HEK293 (cell line): ENCODE measurements at regions of chr15 and their contacts with region 1.

Region 1: DNA sequence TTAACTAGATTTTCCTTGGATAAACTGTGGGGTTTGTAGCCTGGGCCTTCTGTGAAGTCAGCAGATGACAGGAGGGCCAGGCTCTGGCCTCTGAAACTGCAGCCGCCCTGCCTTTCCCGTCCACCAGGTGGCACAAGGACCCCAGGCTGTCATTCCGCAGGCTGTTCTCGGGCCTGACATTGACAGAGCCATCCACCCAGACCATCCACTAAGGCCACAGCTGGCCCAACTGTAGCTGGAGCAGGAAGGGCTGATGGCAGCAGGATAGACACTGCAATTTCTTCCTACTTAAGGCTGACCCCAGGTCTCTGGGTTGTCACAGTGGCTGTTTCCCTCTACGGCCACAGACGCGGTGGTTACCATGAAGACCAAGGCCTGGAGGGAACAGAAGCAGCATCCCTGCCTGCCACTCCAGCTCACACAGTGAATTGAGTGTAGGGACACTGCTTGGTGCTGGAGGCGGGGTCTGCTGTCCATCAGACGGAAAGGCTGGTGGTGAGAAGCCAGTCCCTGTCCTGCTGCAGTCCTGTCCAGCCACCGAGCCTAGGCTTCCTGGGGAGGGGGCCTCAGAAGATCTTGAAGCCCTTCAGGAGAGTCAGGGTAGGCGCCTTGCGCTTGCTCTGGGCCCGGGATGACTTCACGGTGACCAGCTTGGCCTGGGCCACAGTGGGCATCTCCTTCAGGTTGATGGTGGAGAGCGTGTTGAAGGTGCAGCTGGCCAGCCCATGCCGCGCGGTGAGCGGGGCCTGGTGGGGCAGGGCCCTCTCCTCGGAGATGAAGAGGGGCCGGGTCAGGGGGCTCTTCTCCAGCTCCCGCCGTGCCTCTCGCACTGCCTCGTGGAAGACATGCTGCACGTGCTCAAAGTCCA is 9.4 kb downstream of the SLC51B start:
- H3K4me3 ChIP-seq: no peak overlapping the region
- H3K27ac ChIP-seq: no peak overlapping the region
- H3K4me1 ChIP-seq: no peaks in the 10 kb centered on the region
- CTCF ChIP-seq: peak; percentile 62; the same call in 1 of the 2 replicates

Region 2: GRCh38 chr15:64856429-64857145 is 198.0 kb before region 1 on chr15:
- CTCF ChIA-PET with region 1: no interaction called
- POLR2A ChIA-PET with region 1: no interaction called
- H3K4me3 ChIP-seq: no peak overlapping the region
- H3K27ac ChIP-seq: no peak overlapping the region
- H3K4me1 ChIP-seq: no peaks in the 10 kb centered on the region; the same call in 1 of the 2 replicates
- CTCF ChIP-seq: no peak

Region 3: DNA sequence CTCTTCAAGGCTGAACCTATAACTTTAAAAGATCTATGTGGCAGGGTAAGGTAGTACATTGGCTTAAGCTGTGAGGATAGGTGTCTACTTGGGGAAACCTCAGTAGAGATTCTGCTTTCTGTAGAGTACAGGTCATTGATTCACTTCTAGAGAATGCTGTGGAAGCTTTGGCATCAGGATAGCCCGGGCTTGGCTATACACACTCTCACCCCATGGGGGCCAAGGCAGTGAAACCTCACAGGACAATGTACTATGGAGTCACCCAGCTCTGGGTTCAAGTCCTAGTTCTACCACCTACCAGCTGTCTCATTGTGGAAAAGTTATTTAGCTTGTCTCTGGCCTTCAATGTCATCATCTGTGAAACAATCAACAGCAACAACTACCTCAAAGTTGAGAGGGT is 34.1 kb before region 1 on chr15:
- CTCF ChIA-PET with region 1: no interaction called
- POLR2A ChIA-PET with region 1: no interaction called
- H3K4me3 ChIP-seq: no peak overlapping the region
- H3K27ac ChIP-seq: no peak overlapping the region
- H3K4me1 ChIP-seq: no peaks in the 10 kb centered on the region
- CTCF ChIP-seq: no peak

Region 4: GRCh38 chr15:65032801-65033537 is 21.6 kb before region 1 on chr15:
- CTCF ChIA-PET with region 1: interaction called, 15 read pairs
- POLR2A ChIA-PET with region 1: no interaction called
- H3K4me3 ChIP-seq: no peak overlapping the region
- H3K27ac ChIP-seq: no peak overlapping the region
- H3K4me1 ChIP-seq: no peaks in the 10 kb centered on the region
- CTCF ChIP-seq: peak; percentile 83

Region 5: GRCh38 chr15:65042776-65043327 is 11.7 kb before region 1 on chr15:
- CTCF ChIA-PET with region 1: interaction called, 10 read pairs
- POLR2A ChIA-PET with region 1: no interaction called
- H3K4me3 ChIP-seq: no peak overlapping the region
- H3K27ac ChIP-seq: no peak overlapping the region
- H3K4me1 ChIP-seq: no peaks in the 10 kb centered on the region
- CTCF ChIP-seq: no peak

Region 6: GRCh38 chr15:65077981-65078352 is 23.4 kb after region 1 on chr15:
- CTCF ChIA-PET with region 1: interaction called, 94 read pairs
- POLR2A ChIA-PET with region 1: interaction called, 3 read pairs
- H3K4me3 ChIP-seq: no peak overlapping the region
- H3K27ac ChIP-seq: no peak overlapping the region
- H3K4me1 ChIP-seq: peaks cover 8% of the 10 kb centered on the region
- CTCF ChIP-seq: no peak

Region 7: GRCh38 chr15:65083262-65083701 is 28.7 kb after region 1 on chr15:
- CTCF ChIA-PET with region 1: interaction called, 94 read pairs
- POLR2A ChIA-PET with region 1: interaction called, 3 read pairs
- H3K4me3 ChIP-seq: no peak overlapping the region
- H3K27ac ChIP-seq: no peak overlapping the region
- H3K4me1 ChIP-seq: peaks cover 9% of the 10 kb centered on the region
- CTCF ChIP-seq: 0 out of 2 replicates have a peak, but pooled peaks have one; percentile 30

Region 8: DNA sequence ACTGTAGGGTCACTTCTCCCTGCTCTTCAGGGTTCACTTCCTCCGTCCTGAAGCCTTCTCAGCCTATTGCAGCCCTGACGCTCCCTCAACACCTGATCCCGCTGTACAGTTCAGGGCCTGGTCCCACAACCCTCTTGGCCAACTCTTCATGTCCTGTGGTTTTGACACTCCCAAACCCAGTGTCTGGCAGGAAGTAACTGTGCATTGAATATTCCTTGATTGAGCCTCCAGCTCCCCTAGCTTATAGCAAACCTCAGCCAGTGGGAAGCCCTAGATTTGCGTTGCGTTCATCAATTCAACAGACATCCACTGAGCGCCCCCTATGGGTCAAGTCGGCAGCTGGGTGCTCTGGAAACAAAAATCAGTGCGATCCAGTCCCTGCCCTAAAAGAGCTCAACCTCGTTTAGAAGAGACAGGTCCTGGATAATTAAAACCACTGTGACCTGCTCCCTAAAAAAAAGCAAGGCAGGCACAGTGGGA is 46.9 kb after region 1 on chr15:
- CTCF ChIA-PET with region 1: interaction called, 23 read pairs
- POLR2A ChIA-PET with region 1: no interaction called
- H3K4me3 ChIP-seq: no peak overlapping the region
- H3K27ac ChIP-seq: no peak overlapping the region
- H3K4me1 ChIP-seq: no peaks in the 10 kb centered on the region
- CTCF ChIP-seq: no peak

Region 9: GRCh38 chr15:65275728-65276126 is 221.2 kb after region 1 on chr15:
- CTCF ChIA-PET with region 1: interaction called, 16 read pairs
- POLR2A ChIA-PET with region 1: no interaction called
- H3K4me3 ChIP-seq: no peak overlapping the region
- H3K27ac ChIP-seq: peak overlapping the region; percentile 37; the same call in 1 of the 2 replicates
- H3K4me1 ChIP-seq: no peaks in the 10 kb centered on the region
- CTCF ChIP-seq: no peak